Right lobe of liver (tissue), 6 donors: ENCODE measurements at regions of chr13 and their contacts with region 1.

Region 1: GRCh38 chr13:108895220-108895704 is 265.9 kb downstream of the MYO16 start:
- DNase-seq: no peak
- ATAC-seq: peak in 3 of 4 donors; percentile 61 to 67 (median 62)
- H3K4me3 ChIP-seq: no peak overlapping the region
- H3K27ac ChIP-seq: no peak overlapping the region
- H3K4me1 ChIP-seq: no peaks in the 10 kb centered on the region
- H3K27me3 ChIP-seq: no peaks in the 10 kb centered on the region
- CTCF ChIP-seq: peak; percentile 59 to 63 (median 61)
- POLR2A ChIP-seq: no peak

Region 2: GRCh38 chr13:108322206-108322824 is 572.9 kb before region 1 on chr13:
- intact Hi-C with region 1: loop called in 1 of 2 experiments (anchors 10 kb)
- DNase-seq: no peak
- ATAC-seq: peak; percentile 90 to 93 (median 91)
- H3K4me3 ChIP-seq: no peak overlapping the region
- H3K27ac ChIP-seq: no peak overlapping the region
- H3K4me1 ChIP-seq: no peaks in the 10 kb centered on the region
- H3K27me3 ChIP-seq: peaks cover 0 to 2% of the 10 kb centered on the region in 2 donors
- CTCF ChIP-seq: peak; percentile 75 to 83 (median 78)
- POLR2A ChIP-seq: no peak

Region 3: DNA sequence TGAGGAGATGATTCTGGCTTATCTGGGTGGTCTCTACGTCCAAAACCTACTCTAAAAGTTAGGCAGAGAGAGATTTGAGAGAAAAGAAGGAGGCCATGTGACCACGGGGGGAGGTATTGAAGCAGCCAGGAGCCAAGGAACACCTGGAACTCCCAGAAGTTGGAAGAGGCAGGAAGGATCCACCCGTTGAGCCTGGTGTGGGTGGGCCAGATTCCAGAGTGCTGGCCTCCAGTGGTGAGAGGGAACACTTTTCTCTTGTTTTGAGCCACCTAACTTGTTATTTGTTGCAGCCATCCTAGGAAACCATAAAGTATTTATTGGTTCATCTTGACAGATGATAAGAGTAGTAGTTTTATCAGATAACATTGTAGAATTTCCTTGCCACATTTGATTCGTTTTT is 131.0 kb after region 1 on chr13:
- intact Hi-C with region 1: no loop called
- DNase-seq: no peak
- ATAC-seq: no peak
- H3K4me3 ChIP-seq: no peak overlapping the region
- H3K27ac ChIP-seq: no peak overlapping the region
- H3K4me1 ChIP-seq: no peaks in the 10 kb centered on the region
- H3K27me3 ChIP-seq: no peaks in the 10 kb centered on the region
- CTCF ChIP-seq: no peak
- POLR2A ChIP-seq: no peak

Region 4: DNA sequence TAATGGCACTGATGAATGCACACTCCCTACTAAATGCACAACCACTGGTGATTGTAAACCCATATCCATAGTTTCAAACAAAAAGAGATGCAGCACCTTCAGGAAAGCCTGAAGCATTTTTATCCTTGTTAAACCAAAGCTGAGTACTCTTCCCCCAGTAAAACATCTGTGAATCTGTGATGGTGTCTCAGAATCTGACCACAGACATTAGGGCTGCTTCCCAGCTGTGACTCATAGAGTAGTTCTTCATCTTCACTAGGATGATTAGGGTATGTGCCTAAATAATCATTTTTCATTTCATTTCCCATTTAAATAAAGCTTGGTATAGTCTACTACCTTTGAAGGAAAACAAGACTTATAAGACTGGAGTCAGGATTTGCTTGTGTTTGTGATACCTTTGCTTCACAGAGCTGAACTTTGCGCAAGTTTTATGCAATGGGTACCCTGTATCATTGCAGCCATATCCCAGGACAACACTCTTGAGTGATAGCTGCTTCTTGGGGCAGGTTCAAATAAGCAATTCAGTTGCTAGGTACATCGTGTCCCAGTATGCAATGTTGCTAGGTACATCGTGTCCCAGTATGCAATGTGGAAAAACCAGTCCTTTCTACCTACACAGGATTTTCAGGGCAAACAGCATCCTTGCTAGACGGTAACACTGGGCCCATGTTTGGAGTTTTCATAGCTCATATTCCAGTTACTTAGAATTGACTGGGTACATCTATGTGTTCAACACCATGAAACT is 614.1 kb after region 1 on chr13:
- intact Hi-C with region 1: no loop called
- DNase-seq: no peak
- ATAC-seq: no peak
- H3K4me3 ChIP-seq: no peak overlapping the region
- H3K27ac ChIP-seq: no peak overlapping the region
- H3K4me1 ChIP-seq: no peaks in the 10 kb centered on the region
- H3K27me3 ChIP-seq: no peaks in the 10 kb centered on the region
- CTCF ChIP-seq: no peak
- POLR2A ChIP-seq: no peak